ENCODE measurements at regions of chr3 and their contacts with region 1.

Region 1: GRCh38 chr3:159884661-159885402 is 103.8 kb upstream of the IL12A start:
- DNase-seq: peak; percentile 52
- H3K4me3 ChIP-seq: no peak overlapping the region
- H3K27ac ChIP-seq: peak overlapping the region in 1 of 2 experiments; percentile 97; a peak in 2 of 4 replicates
- H3K4me1 ChIP-seq: peaks cover 32 to 51% of the 10 kb centered on the region in 2 experiments
- H3K27me3 ChIP-seq: no peaks in the 10 kb centered on the region
- CTCF ChIP-seq: peak; percentile 73
- EP300 ChIP-seq: no peak
- RAD21 ChIP-seq: peak; percentile 73

Region 2: GRCh38 chr3:159839561-159840379 is 45.1 kb before region 1 on chr3:
- CTCF ChIA-PET with region 1: interaction called, 189 read pairs
- POLR2A ChIA-PET with region 1: interaction called, 15 read pairs
- DNase-seq: peak; percentile 81
- H3K4me3 ChIP-seq: peak within 1 kb of the TSS; percentile 65 to 67
- H3K27ac ChIP-seq: peak within 1 kb of the TSS; percentile 47 to 99; a peak in 3 of 4 replicates
- H3K4me1 ChIP-seq: peaks cover 21 to 31% of the 10 kb centered on the region in 2 experiments; a peak in 3 of 4 replicates
- H3K27me3 ChIP-seq: no peaks in the 10 kb centered on the region
- CTCF ChIP-seq: no peak
- EP300 ChIP-seq: peak in 1 of 2 experiments; percentile 45; a peak in 1 of 4 replicates
- RAD21 ChIP-seq: peak; percentile 39

Region 3: GRCh38 chr3:159861369-159861987 is 23.4 kb before region 1 on chr3:
- CTCF ChIA-PET with region 1: interaction called, 60 read pairs
- POLR2A ChIA-PET with region 1: interaction called, 23 read pairs
- DNase-seq: no peak
- H3K4me3 ChIP-seq: no peak overlapping the region
- H3K27ac ChIP-seq: peak overlapping the region in 1 of 2 experiments; percentile 87; a peak in 2 of 4 replicates
- H3K4me1 ChIP-seq: peaks cover 20 to 76% of the 10 kb centered on the region in 2 experiments
- H3K27me3 ChIP-seq: no peaks in the 10 kb centered on the region
- CTCF ChIP-seq: no peak
- EP300 ChIP-seq: no peak
- RAD21 ChIP-seq: no peak

Region 4: GRCh38 chr3:159897331-159898075 is 12.7 kb after region 1 on chr3:
- CTCF ChIA-PET with region 1: interaction called, 35 read pairs
- POLR2A ChIA-PET with region 1: no interaction called
- DNase-seq: peak; percentile 21
- H3K4me3 ChIP-seq: no peak overlapping the region
- H3K27ac ChIP-seq: peak overlapping the region; percentile 5 to 69; a peak in 3 of 4 replicates
- H3K4me1 ChIP-seq: peaks cover 0 to 27% of the 10 kb centered on the region in 2 experiments; a peak in 3 of 4 replicates
- H3K27me3 ChIP-seq: no peaks in the 10 kb centered on the region
- CTCF ChIP-seq: no peak
- EP300 ChIP-seq: peak in 1 of 2 experiments; percentile 59; a peak in 2 of 4 replicates
- RAD21 ChIP-seq: no peak

Region 5: DNA sequence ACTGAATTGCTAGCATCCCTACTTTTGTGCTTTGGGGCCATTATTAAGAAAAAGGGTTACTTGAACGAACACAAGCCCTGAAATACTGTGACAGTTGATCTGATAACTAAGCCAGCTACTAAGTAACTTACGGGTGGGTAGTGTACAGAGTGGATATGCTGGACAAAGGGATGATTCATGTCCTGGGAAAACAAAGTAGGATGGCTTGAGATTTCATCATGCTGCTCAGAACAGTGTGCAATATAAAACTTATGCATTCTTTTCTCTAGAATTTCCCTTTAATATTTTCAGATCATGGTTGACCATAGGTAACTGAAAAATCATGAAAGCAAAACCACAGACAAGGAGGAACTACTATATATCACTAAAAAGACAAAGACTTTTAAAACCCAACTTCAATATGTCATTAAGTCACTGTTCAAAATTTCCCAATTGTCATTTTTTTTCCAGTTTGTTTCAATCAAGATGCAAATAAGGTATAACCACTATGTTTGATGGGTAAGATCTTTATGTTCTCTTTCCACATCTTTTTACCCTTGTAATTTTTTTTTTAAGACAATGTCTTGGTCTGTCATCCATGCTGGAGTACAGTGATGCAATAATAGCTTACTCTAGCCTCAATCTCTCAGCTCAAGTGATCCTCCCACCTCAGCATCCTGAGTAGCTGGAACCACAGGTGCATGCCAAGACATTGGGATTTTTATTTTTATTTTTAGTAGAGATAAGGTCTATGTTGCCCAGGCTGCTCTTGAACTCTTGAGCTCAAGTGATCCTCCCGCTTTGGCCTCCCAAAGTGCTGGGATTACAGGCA is 446.5 kb after region 1 on chr3:
- CTCF ChIA-PET with region 1: no interaction called
- POLR2A ChIA-PET with region 1: no interaction called
- DNase-seq: no peak
- H3K4me3 ChIP-seq: no peak overlapping the region
- H3K27ac ChIP-seq: peak overlapping the region in 1 of 2 experiments; percentile 92; a peak in 3 of 4 replicates
- H3K4me1 ChIP-seq: peaks cover 3 to 5% of the 10 kb centered on the region in 2 experiments; a peak in 2 of 4 replicates
- H3K27me3 ChIP-seq: no peaks in the 10 kb centered on the region
- CTCF ChIP-seq: no peak
- EP300 ChIP-seq: 0 out of 4 replicates have a peak, but pooled peaks of 1 of the 2 experiments have one; percentile 60
- RAD21 ChIP-seq: no peak